GM12878 (cell line): ENCODE measurements at regions of chr11 and their contacts with region 1.

Region 1: DNA sequence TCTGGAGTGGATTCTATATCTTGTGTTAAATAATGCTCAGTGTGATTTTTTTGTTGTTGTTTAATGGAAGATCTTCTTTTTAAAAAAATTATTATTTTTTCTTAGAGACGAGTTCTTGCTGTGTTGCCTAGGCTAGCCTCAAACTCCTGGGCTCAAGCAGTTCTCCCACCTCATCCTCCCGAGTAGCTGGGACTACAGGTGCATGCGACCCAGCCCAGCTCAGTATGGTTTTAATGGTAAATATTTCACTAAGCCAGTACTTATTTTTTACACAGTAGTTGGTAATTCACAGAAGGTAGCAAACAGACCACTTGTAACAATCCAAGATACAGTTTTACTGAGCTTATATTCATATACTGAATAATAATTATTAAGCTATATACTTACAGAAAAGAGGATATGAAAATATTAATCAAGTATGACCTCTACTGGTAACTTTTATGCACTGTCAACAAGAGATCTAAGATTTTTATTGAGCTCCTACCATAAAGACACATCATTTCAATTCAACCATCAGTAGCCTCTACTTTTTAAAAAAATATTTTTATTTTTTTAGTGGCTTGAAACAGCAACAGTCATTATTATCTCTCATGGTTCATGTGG is 6.1 kb upstream of the CD59 start:
- DNase-seq: no peak
- ATAC-seq: peak; percentile 87
- H3K4me3 ChIP-seq: no peak overlapping the region
- H3K27ac ChIP-seq: no peak overlapping the region
- H3K4me1 ChIP-seq: no peaks in the 10 kb centered on the region
- H3K27me3 ChIP-seq: no peaks in the 10 kb centered on the region
- CTCF ChIP-seq: peak; percentile 21 to 60 (median 38); a peak in 3 of 6 replicates
- EP300 ChIP-seq: no peak
- POLR2A ChIP-seq: no peak
- RAD21 ChIP-seq: 0 out of 2 replicates have a peak, but pooled peaks have one; percentile 40

Region 2: DNA sequence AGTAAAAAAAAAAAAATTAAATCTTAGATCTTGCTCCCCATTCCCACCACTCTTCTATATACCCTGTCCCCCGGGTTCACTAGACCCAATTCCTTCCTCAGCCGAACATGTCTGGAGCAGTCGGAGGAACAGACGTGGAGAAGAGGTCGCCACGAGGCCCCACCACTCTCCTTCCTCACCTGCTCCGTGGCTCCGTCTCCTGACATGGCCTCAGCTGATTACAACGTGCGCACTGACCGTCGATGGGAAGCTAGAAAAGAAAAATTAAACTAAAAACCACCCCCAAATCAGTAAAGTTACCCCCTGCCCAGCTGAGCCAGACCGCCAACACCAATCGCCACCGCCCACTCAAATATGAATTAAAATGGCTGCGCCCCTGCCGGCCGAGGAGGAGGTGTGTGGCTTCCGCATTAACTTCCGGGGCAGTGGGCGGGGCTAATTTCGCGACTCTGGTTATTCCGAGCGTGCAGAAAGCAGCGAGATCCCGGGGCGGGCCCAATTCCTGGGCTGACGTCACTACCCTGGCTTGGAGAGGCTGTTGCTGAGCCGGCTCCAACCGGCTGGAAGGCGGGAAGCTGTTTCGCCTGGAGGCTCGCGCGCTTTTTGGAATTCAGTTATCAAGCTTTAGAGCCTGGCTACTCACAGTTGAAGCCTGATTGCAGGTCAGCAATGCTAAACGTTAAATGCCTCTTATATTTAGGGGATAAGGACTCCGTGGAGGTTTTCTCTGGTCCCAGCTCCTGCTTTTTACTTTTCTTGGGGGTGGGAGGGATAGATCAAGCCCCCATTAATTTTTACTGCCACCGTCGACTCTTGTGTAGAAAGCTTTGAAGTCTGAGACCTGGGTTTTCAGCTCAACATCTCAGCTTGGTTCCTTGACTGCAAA is 581.0 kb before region 1 on chr11 and contains the start of gene CSTF3:
- CTCF ChIA-PET with region 1: interaction called, 13 read pairs
- POLR2A ChIA-PET with region 1: interaction called, 3 read pairs
- RAD21 ChIA-PET with region 1: interaction called, 4 read pairs
- SMC1A ChIA-PET with region 1: interaction called, 3 read pairs
- in situ Hi-C with region 1: no loop called
- intact Hi-C with region 1: no loop called
- DNase-seq: peak; percentile 74
- ATAC-seq: peak; percentile 92
- H3K4me3 ChIP-seq: peak within 1 kb of the TSS; percentile 91
- H3K27ac ChIP-seq: peak within 1 kb of the TSS; percentile 97
- H3K4me1 ChIP-seq: no peaks in the 10 kb centered on the region
- H3K27me3 ChIP-seq: no peaks in the 10 kb centered on the region
- CTCF ChIP-seq: peak; percentile 19 to 23 (median 19); a peak in 3 of 6 replicates
- EP300 ChIP-seq: no peak; a peak in 1 of 4 replicates
- POLR2A ChIP-seq: peak; percentile 80
- RAD21 ChIP-seq: no peak
- polyA plus RNA-seq, gene CSTF3: 42.0 to 50.1 TPM

Region 3: GRCh38 chr11:33542921-33543320 is 199.4 kb before region 1 on chr11:
- CTCF ChIA-PET with region 1: interaction called, 45 read pairs
- POLR2A ChIA-PET with region 1: no interaction called
- RAD21 ChIA-PET with region 1: interaction called, 20 read pairs
- SMC1A ChIA-PET with region 1: interaction called, 30 read pairs
- in situ Hi-C with region 1: no loop called
- intact Hi-C with region 1: loop called (anchors 2 kb)
- DNase-seq: no peak
- ATAC-seq: peak; percentile 84
- H3K4me3 ChIP-seq: no peak overlapping the region
- H3K27ac ChIP-seq: no peak overlapping the region
- H3K4me1 ChIP-seq: peaks cover 24% of the 10 kb centered on the region
- H3K27me3 ChIP-seq: no peaks in the 10 kb centered on the region; a peak in 1 of 4 replicates
- CTCF ChIP-seq: peak; percentile 63 to 72 (median 67)
- EP300 ChIP-seq: no peak
- POLR2A ChIP-seq: no peak
- RAD21 ChIP-seq: peak; percentile 74

Region 4: GRCh38 chr11:33695051-33695566 is 47.2 kb before region 1 on chr11:
- CTCF ChIA-PET with region 1: interaction called, 45 read pairs
- POLR2A ChIA-PET with region 1: no interaction called
- RAD21 ChIA-PET with region 1: interaction called, 17 read pairs
- SMC1A ChIA-PET with region 1: interaction called, 30 read pairs
- in situ Hi-C with region 1: no loop called
- intact Hi-C with region 1: loop called (anchors 5 kb)
- DNase-seq: no peak
- ATAC-seq: peak; percentile 14
- H3K4me3 ChIP-seq: no peak overlapping the region
- H3K27ac ChIP-seq: no peak overlapping the region
- H3K4me1 ChIP-seq: peaks cover 9% of the 10 kb centered on the region
- H3K27me3 ChIP-seq: no peaks in the 10 kb centered on the region
- CTCF ChIP-seq: no peak
- EP300 ChIP-seq: no peak
- POLR2A ChIP-seq: no peak
- RAD21 ChIP-seq: no peak

Region 5: GRCh38 chr11:33716236-33716635 is 26.1 kb before region 1 on chr11:
- CTCF ChIA-PET with region 1: interaction called, 276 read pairs
- POLR2A ChIA-PET with region 1: interaction called, 6 read pairs
- RAD21 ChIA-PET with region 1: interaction called, 158 read pairs
- SMC1A ChIA-PET with region 1: interaction called, 153 read pairs
- in situ Hi-C with region 1: no loop called
- intact Hi-C with region 1: loop called (anchors 1 kb)
- DNase-seq: no peak
- ATAC-seq: peak; percentile 76
- H3K4me3 ChIP-seq: no peak overlapping the region
- H3K27ac ChIP-seq: no peak overlapping the region
- H3K4me1 ChIP-seq: no peaks in the 10 kb centered on the region
- H3K27me3 ChIP-seq: no peaks in the 10 kb centered on the region
- CTCF ChIP-seq: peak; percentile 38 to 65 (median 39); a peak in 4 of 6 replicates
- EP300 ChIP-seq: no peak
- POLR2A ChIP-seq: no peak
- RAD21 ChIP-seq: peak; percentile 72

Region 6: GRCh38 chr11:33753304-33753967 is 11.1 kb after region 1 on chr11:
- CTCF ChIA-PET with region 1: interaction called, 53 read pairs
- POLR2A ChIA-PET with region 1: no interaction called
- RAD21 ChIA-PET with region 1: interaction called, 17 read pairs
- SMC1A ChIA-PET with region 1: interaction called, 9 read pairs
- in situ Hi-C with region 1: no loop called
- intact Hi-C with region 1: no loop called
- DNase-seq: peak; percentile 70
- ATAC-seq: peak; percentile 100
- H3K4me3 ChIP-seq: 0 out of 2 replicates have a peak overlapping the region, but pooled peaks have one; percentile 20
- H3K27ac ChIP-seq: 0 out of 2 replicates have a peak overlapping the region, but pooled peaks have one; percentile 29
- H3K4me1 ChIP-seq: peaks cover 12% of the 10 kb centered on the region
- H3K27me3 ChIP-seq: no peaks in the 10 kb centered on the region
- CTCF ChIP-seq: no peak
- EP300 ChIP-seq: no peak
- POLR2A ChIP-seq: no peak
- RAD21 ChIP-seq: no peak

Region 7: DNA sequence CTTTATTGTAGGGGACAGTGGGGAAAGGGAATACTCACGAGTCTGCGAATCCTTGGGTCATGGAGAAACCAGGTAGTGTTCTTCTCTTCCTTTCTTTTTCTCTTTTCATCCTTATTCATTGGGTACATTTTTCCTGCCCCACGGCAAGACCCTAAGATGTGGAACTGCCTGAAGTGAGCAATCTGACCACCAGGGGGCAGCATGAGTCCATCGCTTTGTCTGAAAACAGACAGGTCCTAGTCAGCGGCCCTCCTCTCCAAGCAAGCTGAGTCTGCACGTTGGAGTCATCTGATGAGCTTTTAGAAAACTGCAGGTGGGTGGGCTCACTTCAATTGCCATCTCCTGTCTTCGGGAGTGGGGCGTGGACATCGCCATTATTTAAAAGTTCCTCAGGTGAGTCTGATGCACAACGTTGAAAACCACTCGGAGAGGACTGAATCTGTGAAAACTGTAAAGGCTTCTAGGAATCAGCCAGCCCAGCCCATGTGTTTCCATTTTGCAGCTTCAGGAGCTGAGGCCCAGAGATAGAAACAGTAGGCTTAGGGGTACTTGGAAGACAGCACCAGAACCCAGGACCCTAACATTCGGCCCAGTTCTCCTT is 66.0 kb after region 1 on chr11:
- CTCF ChIA-PET with region 1: interaction called, 11 read pairs
- POLR2A ChIA-PET with region 1: no interaction called
- RAD21 ChIA-PET with region 1: interaction called, 5 read pairs
- SMC1A ChIA-PET with region 1: interaction called, 6 read pairs
- in situ Hi-C with region 1: no loop called
- intact Hi-C with region 1: no loop called
- DNase-seq: peak; percentile 37
- ATAC-seq: peak; percentile 99
- H3K4me3 ChIP-seq: no peak overlapping the region
- H3K27ac ChIP-seq: no peak overlapping the region
- H3K4me1 ChIP-seq: no peaks in the 10 kb centered on the region
- H3K27me3 ChIP-seq: peaks cover 0 to 2% of the 10 kb centered on the region in 2 experiments; a peak in 2 of 4 replicates
- CTCF ChIP-seq: peak; percentile 82 to 92 (median 83)
- EP300 ChIP-seq: no peak
- POLR2A ChIP-seq: no peak
- RAD21 ChIP-seq: peak; percentile 78

Region 8: GRCh38 chr11:33868647-33869461 is 126.5 kb after region 1 on chr11:
- CTCF ChIA-PET with region 1: no interaction called
- POLR2A ChIA-PET with region 1: no interaction called
- RAD21 ChIA-PET with region 1: no interaction called
- SMC1A ChIA-PET with region 1: no interaction called
- in situ Hi-C with region 1: no loop called
- intact Hi-C with region 1: no loop called
- DNase-seq: no peak
- ATAC-seq: peak; percentile 10; the same call in 1 of the 3 replicates
- H3K4me3 ChIP-seq: peak overlapping the region; percentile 72
- H3K27ac ChIP-seq: no peak overlapping the region
- H3K4me1 ChIP-seq: peaks cover 4% of the 10 kb centered on the region
- H3K27me3 ChIP-seq: peaks cover 4 to 8% of the 10 kb centered on the region in 2 experiments
- CTCF ChIP-seq: no peak
- EP300 ChIP-seq: no peak
- POLR2A ChIP-seq: no peak
- RAD21 ChIP-seq: no peak

Region 9: GRCh38 chr11:33936725-33937604 is 194.6 kb after region 1 on chr11:
- CTCF ChIA-PET with region 1: no interaction called
- POLR2A ChIA-PET with region 1: no interaction called
- RAD21 ChIA-PET with region 1: no interaction called
- SMC1A ChIA-PET with region 1: no interaction called
- in situ Hi-C with region 1: no loop called
- intact Hi-C with region 1: no loop called
- DNase-seq: no peak
- ATAC-seq: no peak
- H3K4me3 ChIP-seq: no peak overlapping the region
- H3K27ac ChIP-seq: no peak overlapping the region
- H3K4me1 ChIP-seq: peaks cover 24% of the 10 kb centered on the region
- H3K27me3 ChIP-seq: no peaks in the 10 kb centered on the region
- CTCF ChIP-seq: no peak
- EP300 ChIP-seq: no peak
- POLR2A ChIP-seq: no peak
- RAD21 ChIP-seq: no peak

Region 10: DNA sequence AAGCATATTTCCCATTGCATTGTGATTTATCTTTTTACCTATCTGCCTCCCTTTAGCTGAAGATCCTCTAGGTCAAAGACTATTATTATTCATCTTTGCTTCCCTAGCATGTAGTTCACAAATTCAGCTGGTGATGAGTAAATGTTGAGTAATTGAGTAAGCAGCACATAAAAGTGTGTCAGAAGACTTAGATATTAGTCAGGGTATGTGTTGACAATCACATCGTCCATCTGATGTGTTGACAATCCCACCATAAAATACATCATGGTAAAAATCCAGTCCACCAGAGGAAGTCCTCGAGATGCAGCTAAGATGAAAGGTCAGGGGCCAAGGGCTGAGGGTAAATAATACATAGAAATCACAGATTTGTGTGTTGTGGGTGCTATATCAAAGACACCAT is 638.3 kb after region 1 on chr11:
- CTCF ChIA-PET with region 1: no interaction called
- POLR2A ChIA-PET with region 1: no interaction called
- RAD21 ChIA-PET with region 1: no interaction called
- SMC1A ChIA-PET with region 1: no interaction called
- in situ Hi-C with region 1: no loop called
- intact Hi-C with region 1: no loop called
- DNase-seq: no peak
- ATAC-seq: no peak
- H3K4me3 ChIP-seq: no peak overlapping the region
- H3K27ac ChIP-seq: no peak overlapping the region
- H3K4me1 ChIP-seq: no peaks in the 10 kb centered on the region
- H3K27me3 ChIP-seq: no peaks in the 10 kb centered on the region
- CTCF ChIP-seq: no peak
- EP300 ChIP-seq: no peak
- POLR2A ChIP-seq: no peak
- RAD21 ChIP-seq: no peak